Common myeloid progenitor, CD34-positive (primary cell): ENCODE measurements at regions of chr19 and their contacts with region 1.

Region 1: DNA sequence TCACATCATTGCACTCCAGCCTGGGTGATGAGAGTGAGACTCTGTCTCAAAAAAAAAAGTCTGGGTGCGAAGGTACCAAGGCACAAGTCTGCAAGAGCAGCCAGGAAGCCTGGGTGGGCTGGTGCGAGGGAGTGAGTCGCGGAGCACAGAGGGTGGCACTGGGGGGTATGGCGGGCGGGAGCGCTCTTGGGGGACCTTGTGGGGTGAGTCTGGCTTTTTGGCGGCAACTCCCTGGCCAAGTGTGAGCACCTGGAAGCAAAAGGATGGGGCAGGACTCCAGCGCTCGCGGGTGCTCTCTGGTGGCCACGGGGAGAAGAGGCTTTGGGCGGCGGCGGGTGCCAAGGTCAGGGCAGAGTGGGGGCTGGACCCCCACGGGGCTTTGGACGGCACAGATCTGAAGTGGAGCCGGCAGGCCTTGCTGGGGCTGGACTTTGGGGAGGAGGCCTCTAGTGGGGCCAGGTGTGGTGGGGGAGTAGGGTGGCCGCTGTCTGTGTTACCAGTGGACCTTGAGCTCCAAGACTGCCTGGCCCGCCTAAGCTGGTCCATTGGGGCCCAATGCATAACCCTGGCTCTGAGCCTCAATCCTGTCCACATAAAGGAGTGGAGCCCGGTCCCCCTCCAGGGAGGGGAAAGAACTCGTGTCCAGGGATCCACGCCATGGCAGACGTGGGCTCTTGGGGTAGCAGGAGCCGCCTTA is 1.6 kb downstream of the P2RY11 start:
- DNase-seq: peak in 2 of 3 donors; percentile 59 to 60
- H3K4me3 ChIP-seq: no peak overlapping the region
- H3K27ac ChIP-seq: no peak overlapping the region
- H3K4me1 ChIP-seq: peaks cover 0 to 38% (median 28%) of the 10 kb centered on the region in 4 experiments
- H3K27me3 ChIP-seq: no peaks in the 10 kb centered on the region

Region 2: DNA sequence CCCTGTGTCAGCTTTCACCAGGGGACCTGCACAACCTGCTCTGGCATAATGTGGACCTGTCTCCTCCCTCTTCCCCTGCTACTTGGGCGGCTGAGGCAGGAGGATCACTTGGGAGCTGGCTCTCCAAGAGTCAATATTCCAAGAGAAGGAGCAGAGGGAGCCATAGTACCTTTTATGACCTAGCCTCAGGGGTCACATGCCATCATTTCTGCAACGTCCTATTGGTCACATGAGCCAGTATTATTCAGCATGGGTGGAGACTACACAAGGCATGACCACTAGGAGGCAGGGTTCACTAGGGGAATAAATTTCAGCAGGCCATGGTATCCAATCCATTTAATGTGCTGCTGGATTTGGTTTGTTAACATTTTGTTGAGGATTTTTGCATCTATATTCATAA is 38.9 kb before region 1 on chr19:
- CTCF ChIA-PET with region 1: no interaction called
- POLR2A ChIA-PET with region 1: no interaction called
- DNase-seq: peak; percentile 38 to 66 (median 65)
- H3K4me3 ChIP-seq: no peak overlapping the region
- H3K27ac ChIP-seq: no peak overlapping the region
- H3K4me1 ChIP-seq: no peaks in the 10 kb centered on the region
- H3K27me3 ChIP-seq: peaks cover 0 to 4% (median 0%) of the 10 kb centered on the region in 5 experiments

Region 3: GRCh38 chr19:10095948-10096621 is 17.0 kb before region 1 on chr19:
- CTCF ChIA-PET with region 1: interaction called, 118 read pairs
- POLR2A ChIA-PET with region 1: interaction called, 8 read pairs
- DNase-seq: peak; percentile 87 to 93 (median 92)
- H3K4me3 ChIP-seq: peak overlapping the region in 5 of 7 experiments; percentile 16 to 73 (median 51)
- H3K27ac ChIP-seq: no peak overlapping the region
- H3K4me1 ChIP-seq: peaks cover 0 to 13% (median 7%) of the 10 kb centered on the region in 4 experiments
- H3K27me3 ChIP-seq: no peaks in the 10 kb centered on the region

Region 4: DNA sequence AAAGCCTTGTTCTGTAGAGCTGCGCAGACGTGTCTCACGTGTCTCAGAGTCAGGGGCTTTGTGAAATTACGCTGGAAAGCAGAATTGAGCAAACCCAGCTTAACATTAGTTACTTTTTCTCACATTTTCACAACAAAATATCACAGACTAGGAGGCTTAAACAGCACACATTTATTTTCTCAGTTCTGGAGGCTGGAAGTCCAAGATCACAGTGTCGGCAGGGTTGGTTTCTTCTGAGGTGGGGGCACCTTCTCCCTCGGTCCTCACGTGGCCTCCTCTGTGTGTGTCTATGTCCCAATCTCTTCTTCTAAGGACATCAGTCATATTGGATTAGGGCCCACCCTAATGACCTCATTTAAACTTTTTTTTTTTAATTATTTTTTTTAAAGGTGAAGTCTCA is 11.4 kb after region 1 on chr19:
- CTCF ChIA-PET with region 1: interaction called, 13 read pairs
- POLR2A ChIA-PET with region 1: interaction called, 4 read pairs
- DNase-seq: no peak
- H3K4me3 ChIP-seq: no peak overlapping the region
- H3K27ac ChIP-seq: no peak overlapping the region
- H3K4me1 ChIP-seq: peaks cover 0 to 22% (median 16%) of the 10 kb centered on the region in 4 experiments
- H3K27me3 ChIP-seq: no peaks in the 10 kb centered on the region

Region 5: GRCh38 chr19:10152100-10152499 is 39.1 kb after region 1 on chr19:
- CTCF ChIA-PET with region 1: no interaction called
- POLR2A ChIA-PET with region 1: no interaction called
- DNase-seq: peak in 2 of 3 donors; percentile 10 to 12
- H3K4me3 ChIP-seq: no peak overlapping the region
- H3K27ac ChIP-seq: peak overlapping the region in 1 of 2 experiments; percentile 5
- H3K4me1 ChIP-seq: no peaks in the 10 kb centered on the region
- H3K27me3 ChIP-seq: no peaks in the 10 kb centered on the region